WTC11 (cell line): ENCODE measurements at regions of chr4 and their contacts with region 1.

Region 1: DNA sequence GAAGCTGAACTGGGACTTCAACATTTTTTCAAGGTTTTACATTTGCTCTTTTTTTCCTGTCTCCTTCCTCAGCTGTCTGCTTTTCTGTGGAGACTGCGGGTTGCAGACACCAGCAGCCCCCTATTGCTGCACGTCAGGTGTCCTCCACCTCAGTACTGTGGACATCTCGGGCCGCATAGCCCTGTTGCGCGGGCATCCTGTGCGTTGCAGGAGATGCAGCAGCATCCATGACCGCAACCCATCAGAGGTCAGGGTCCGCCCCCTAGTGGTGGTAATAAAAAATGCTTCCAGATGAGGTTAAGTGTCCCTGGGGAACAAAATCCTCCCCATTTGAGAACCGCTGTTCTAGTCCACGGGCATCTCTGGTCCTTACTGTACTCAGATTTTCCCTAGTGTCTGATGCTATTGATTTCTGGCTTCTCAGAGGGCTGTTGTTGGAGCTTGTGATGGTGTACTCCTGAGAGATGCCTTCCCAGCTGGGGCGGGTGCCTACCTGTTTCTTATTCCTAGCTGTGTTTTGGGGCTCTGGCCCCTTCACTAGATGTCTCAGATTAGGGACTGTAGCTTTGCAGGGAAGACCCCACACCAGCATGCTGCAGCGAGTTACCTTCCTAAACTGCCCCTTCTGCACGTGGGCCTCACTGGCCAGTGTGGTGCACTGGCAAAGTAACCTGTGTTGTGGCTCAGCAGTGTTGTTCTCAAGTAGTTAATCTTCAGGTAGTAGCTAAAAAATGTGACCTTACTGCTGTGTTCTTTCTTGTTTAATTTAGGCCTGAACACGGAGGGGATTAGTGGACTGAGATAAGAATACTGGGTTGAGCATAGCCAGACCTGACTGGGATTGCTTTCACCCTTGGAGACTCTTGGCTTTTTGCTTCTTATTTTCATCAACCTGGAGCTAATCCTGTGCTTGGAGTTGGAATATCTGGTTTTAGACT is 28.2 kb downstream of the NSD2 start:
- DNase-seq: peak; percentile 79
- ATAC-seq: peak; percentile 97
- H3K4me3 Mint-ChIP-seq: no peak overlapping the region
- H3K27ac Mint-ChIP-seq: peak overlapping the region; percentile 71; the same call in 1 of the 2 replicates
- H3K4me1 Mint-ChIP-seq: peaks cover 6% of the 10 kb centered on the region
- H3K27me3 Mint-ChIP-seq: no peaks in the 10 kb centered on the region
- CTCF ChIP-seq: peak; percentile 94

Region 2: DNA sequence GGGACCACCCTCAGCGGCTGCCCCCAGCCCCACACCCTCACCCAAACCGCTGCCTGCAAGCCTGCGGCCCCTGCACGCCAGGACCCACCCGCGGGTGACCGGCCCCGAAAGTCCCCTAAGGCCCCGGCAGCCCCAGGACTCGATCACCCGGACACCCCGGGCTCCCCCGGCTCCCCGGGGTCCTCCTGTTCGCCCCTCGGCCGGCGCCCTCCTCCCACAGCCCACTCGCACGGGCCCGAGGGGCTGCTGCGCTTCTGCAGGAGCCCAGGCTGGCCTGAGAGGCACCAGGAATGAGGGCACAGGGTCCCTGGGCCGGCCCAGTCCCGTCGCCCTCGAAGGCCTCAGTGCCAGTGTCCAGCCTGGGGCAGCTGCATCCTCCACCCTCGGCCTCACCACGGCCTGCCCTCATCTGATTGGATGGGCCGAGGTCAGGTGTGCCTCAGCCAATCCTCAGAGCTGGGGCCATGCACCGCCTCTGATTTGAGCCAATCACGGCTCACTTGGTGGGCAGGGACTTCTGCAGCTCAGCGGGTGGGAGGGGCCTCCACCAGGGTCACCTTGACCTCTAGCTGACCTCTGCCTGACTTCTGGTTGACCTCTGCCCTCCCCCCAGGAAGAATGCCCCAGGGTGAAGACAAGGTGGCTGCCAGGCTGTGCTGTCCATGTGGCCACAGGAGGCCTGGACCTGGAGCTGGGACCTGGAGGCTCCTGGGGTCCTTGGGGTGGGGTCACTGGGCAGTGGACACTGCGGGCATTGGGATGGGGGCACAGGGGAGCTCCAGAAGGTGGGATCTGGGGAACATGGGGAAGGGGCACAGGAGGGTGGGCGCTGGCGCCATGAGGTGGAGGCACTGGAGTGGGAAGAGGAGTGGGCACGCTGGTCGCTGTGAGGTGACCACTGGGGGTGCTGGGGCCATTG is 395.6 kb before region 1 on chr4:
- CTCF ChIA-PET with region 1: no interaction called
- POLR2A ChIA-PET with region 1: no interaction called
- DNase-seq: peak; percentile 11
- ATAC-seq: no peak
- H3K4me3 Mint-ChIP-seq: no peak overlapping the region
- H3K27ac Mint-ChIP-seq: no peak overlapping the region
- H3K4me1 Mint-ChIP-seq: peaks cover 4% of the 10 kb centered on the region
- H3K27me3 Mint-ChIP-seq: no peaks in the 10 kb centered on the region
- CTCF ChIP-seq: no peak

Region 3: DNA sequence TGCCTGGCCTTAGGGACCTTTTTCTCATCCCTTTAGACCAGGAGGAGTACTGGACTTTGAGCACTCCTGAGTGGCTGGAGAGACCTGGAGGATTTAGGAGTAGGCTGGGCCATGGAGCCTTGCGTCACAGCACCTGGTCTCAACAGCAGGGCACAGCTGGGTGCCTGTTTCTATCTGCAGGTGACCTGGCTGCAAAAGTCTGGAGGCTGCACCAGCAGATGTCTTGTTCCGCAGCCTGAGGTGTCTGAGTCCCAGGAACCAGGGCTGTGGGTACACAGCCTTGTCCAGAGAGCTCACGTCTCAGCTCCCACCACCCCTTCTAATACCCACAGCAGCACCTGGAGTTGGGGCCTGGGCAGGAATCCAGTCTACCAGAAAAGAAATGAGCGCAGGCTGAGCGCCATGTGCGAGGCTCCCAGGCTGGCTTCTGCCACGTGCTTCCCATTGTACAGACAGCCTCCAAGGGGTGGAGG is 33.2 kb before region 1 on chr4:
- CTCF ChIA-PET with region 1: no interaction called
- POLR2A ChIA-PET with region 1: no interaction called
- DNase-seq: no peak
- ATAC-seq: no peak
- H3K4me3 Mint-ChIP-seq: no peak overlapping the region
- H3K27ac Mint-ChIP-seq: no peak overlapping the region
- H3K4me1 Mint-ChIP-seq: peaks cover 8% of the 10 kb centered on the region
- H3K27me3 Mint-ChIP-seq: peaks cover 90% of the 10 kb centered on the region
- CTCF ChIP-seq: no peak

Region 4: GRCh38 chr4:1883583-1883982 is 15.8 kb before region 1 on chr4:
- CTCF ChIA-PET with region 1: interaction called, 11 read pairs
- POLR2A ChIA-PET with region 1: no interaction called
- DNase-seq: no peak
- ATAC-seq: no peak
- H3K4me3 Mint-ChIP-seq: no peak overlapping the region
- H3K27ac Mint-ChIP-seq: peak overlapping the region; percentile 66
- H3K4me1 Mint-ChIP-seq: peaks cover 9% of the 10 kb centered on the region
- H3K27me3 Mint-ChIP-seq: no peaks in the 10 kb centered on the region
- CTCF ChIP-seq: no peak

Region 5: GRCh38 chr4:1910643-1911042 is 11.2 kb after region 1 on chr4:
- CTCF ChIA-PET with region 1: interaction called, 23 read pairs
- POLR2A ChIA-PET with region 1: interaction called, 5 read pairs
- DNase-seq: peak; percentile 69
- ATAC-seq: peak; percentile 99
- H3K4me3 Mint-ChIP-seq: no peak overlapping the region
- H3K27ac Mint-ChIP-seq: peak overlapping the region; percentile 94
- H3K4me1 Mint-ChIP-seq: peaks cover 7% of the 10 kb centered on the region
- H3K27me3 Mint-ChIP-seq: no peaks in the 10 kb centered on the region
- CTCF ChIP-seq: peak; percentile 36; the same call in 1 of the 2 replicates

Region 6: DNA sequence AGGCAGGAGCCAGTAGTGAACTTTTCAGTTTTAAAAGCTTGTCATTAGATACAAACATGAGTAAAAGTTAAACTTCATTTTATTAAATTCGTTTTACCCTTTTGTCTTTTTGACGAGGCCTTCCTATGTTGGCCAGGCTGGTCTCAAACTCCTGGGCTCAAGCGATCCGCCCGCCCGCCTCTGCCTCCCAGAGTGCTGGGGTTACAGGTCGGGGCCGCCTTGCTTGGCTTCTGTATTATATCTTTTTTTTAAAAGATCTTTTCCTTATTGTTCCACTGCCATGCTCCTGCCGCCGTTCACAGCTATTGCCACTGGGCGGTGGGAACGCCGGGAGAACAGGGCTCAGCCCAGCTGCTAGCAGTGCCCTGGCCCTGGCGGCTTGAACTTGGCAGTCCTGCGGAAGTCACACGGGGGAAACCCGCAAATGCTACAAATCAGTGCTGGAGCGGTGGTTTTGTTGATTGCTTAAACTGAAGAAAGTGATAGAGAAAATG is 110.3 kb after region 1 on chr4:
- CTCF ChIA-PET with region 1: no interaction called
- POLR2A ChIA-PET with region 1: no interaction called
- DNase-seq: peak; percentile 66
- ATAC-seq: peak; percentile 63
- H3K4me3 Mint-ChIP-seq: peak overlapping the region; percentile 85
- H3K27ac Mint-ChIP-seq: no peak overlapping the region
- H3K4me1 Mint-ChIP-seq: peaks cover 14% of the 10 kb centered on the region
- H3K27me3 Mint-ChIP-seq: peaks cover 9% of the 10 kb centered on the region
- CTCF ChIP-seq: no peak